ENCODE measurements at regions of chr15 and their contacts with region 1.

Region 1: GRCh38 chr15:40108855-40109735 is at the start of gene BMF:
- DNase-seq: peak; percentile 92 to 98 (median 93)
- H3K4me3 ChIP-seq: peak within 1 kb of the TSS; percentile 44 to 76
- H3K4me3 Mint-ChIP-seq: peak within 1 kb of the TSS; percentile 93 to 98 (median 96)
- H3K27ac ChIP-seq: peak within 1 kb of the TSS; percentile 56
- H3K27ac Mint-ChIP-seq: peak within 1 kb of the TSS; percentile 88 to 95 (median 92)
- H3K4me1 ChIP-seq: peaks cover 46% of the 10 kb centered on the region
- H3K4me1 Mint-ChIP-seq: peaks cover 17 to 49% (median 30%) of the 10 kb centered on the region in 4 donors
- H3K27me3 ChIP-seq: no peaks in the 10 kb centered on the region
- H3K27me3 Mint-ChIP-seq: peaks cover 2 to 4% of the 10 kb centered on the region in 2 donors
- total RNA-seq, gene BMF: 13.3 to 13.7 TPM

Region 2: DNA sequence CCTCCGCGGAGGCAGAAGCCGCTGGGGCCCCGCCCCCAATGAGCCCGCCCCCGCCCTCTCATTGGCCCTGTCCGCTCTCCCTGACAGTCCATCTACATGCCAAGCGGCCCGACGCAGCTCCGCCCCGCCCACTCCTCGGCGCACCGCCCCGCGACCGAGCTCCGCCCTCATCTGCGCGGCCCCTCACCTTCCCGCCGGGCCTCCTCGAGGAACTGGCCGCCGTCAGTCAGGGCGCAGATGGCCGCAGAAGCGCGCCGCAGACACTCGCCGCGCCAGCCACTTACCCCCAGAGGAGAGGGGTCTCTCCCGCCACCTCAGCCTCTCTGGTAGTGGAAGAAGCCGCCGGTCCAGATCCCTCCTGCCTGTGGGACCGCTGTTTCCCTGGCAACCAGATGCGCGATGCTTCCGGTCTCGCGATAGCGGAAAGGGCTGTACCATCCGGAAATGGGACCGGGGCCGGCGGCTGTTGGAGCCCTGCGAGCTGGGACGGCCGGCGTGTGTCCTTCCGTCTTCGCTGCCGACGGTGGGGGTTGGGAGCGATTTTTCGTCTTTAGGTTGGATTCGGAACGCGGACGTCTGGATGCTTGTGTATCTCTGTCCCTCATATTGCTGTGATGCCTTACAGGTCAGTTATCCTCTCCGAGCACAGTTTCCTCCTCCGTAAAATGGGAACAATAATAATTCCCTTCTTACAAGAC is 326.5 kb before region 1 on chr15 and contains the start of gene FSIP1:
- CTCF ChIA-PET with region 1: no interaction called
- POLR2A ChIA-PET with region 1: interaction called, 4 read pairs
- intact Hi-C with region 1: loop called (anchors 2 kb)
- DNase-seq: peak; percentile 96 to 99 (median 97)
- H3K4me3 ChIP-seq: peak within 1 kb of the TSS; percentile 97 to 100
- H3K4me3 Mint-ChIP-seq: peak within 1 kb of the TSS; percentile 88 to 98 (median 96)
- H3K27ac ChIP-seq: peak within 1 kb of the TSS; percentile 60
- H3K27ac Mint-ChIP-seq: peak within 1 kb of the TSS; percentile 83 to 97 (median 93)
- H3K4me1 ChIP-seq: peaks cover 38% of the 10 kb centered on the region
- H3K4me1 Mint-ChIP-seq: peaks cover 28 to 55% (median 44%) of the 10 kb centered on the region in 4 donors
- H3K27me3 ChIP-seq: no peaks in the 10 kb centered on the region
- H3K27me3 Mint-ChIP-seq: no peaks in the 10 kb centered on the region
- total RNA-seq, gene FSIP1: 0.47 to 1.1 TPM

Region 3: GRCh38 chr15:39852250-39852649 is 256.8 kb before region 1 on chr15:
- CTCF ChIA-PET with region 1: no interaction called
- POLR2A ChIA-PET with region 1: no interaction called
- intact Hi-C with region 1: no loop called
- DNase-seq: no peak
- H3K4me3 ChIP-seq: no peak overlapping the region
- H3K4me3 Mint-ChIP-seq: no peak overlapping the region
- H3K27ac ChIP-seq: no peak overlapping the region
- H3K27ac Mint-ChIP-seq: no peak overlapping the region
- H3K4me1 ChIP-seq: no peaks in the 10 kb centered on the region
- H3K4me1 Mint-ChIP-seq: no peaks in the 10 kb centered on the region
- H3K27me3 ChIP-seq: no peaks in the 10 kb centered on the region
- H3K27me3 Mint-ChIP-seq: peaks cover 14 to 17% of the 10 kb centered on the region in 2 donors

Region 4: DNA sequence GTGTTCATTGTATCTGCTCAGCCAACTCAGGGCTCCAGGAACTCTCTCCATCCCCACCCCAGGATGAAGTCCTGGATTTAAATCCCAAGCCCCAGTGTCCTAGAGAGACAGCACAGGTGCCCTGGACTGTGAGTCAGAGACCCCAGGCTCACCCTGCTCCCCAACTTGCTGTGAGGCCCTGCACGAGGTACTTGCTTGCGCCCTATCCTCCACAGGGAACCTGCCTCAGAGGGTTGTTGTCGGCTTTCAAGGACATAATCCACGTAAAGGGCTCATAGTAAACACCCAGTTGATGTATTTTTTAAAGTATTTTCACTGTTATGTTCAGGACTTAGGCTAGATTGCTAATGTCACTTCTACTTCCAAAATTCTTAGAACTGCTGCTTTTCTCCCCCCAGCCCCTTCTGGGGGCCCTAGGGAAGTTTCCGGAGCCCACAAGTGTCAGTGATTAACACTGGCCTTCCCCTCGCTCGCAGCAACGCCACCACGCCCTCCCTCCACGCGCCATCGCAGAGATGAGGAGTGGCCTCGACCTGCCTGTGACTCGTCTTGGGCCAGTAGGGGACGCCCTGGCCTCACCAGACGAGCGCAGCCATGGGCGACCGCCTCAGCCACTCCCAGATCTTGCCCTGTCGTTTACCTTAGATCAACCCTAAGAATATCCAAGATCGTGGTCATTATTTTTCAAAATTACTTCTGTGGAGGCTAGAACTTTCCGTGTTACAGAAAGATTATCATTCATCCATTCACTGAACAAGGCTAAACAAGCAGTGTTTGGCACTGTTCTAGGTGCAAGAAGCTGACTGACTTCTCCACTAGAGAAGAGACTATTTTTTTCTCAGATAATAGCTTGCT is 64.2 kb before region 1 on chr15:
- CTCF ChIA-PET with region 1: interaction called, 175 read pairs
- POLR2A ChIA-PET with region 1: interaction called, 63 read pairs
- intact Hi-C with region 1: no loop called
- DNase-seq: peak; percentile 70 to 82 (median 75)
- H3K4me3 ChIP-seq: peak overlapping the region in 1 of 2 donors; percentile 1
- H3K4me3 Mint-ChIP-seq: peak overlapping the region; percentile 1 to 73 (median 46)
- H3K27ac ChIP-seq: peak overlapping the region; percentile 24
- H3K27ac Mint-ChIP-seq: peak overlapping the region in 6 of 7 donors; percentile 47 to 91 (median 73)
- H3K4me1 ChIP-seq: peaks cover 55% of the 10 kb centered on the region
- H3K4me1 Mint-ChIP-seq: peaks cover 36 to 61% (median 41%) of the 10 kb centered on the region in 4 donors
- H3K27me3 ChIP-seq: no peaks in the 10 kb centered on the region
- H3K27me3 Mint-ChIP-seq: no peaks in the 10 kb centered on the region

Region 5: GRCh38 chr15:40087991-40088928 is 20.8 kb before region 1 on chr15:
- CTCF ChIA-PET with region 1: interaction called, 152 read pairs
- POLR2A ChIA-PET with region 1: interaction called, 6 read pairs
- intact Hi-C with region 1: no loop called
- DNase-seq: no peak
- H3K4me3 ChIP-seq: no peak overlapping the region
- H3K4me3 Mint-ChIP-seq: no peak overlapping the region
- H3K27ac ChIP-seq: no peak overlapping the region
- H3K27ac Mint-ChIP-seq: no peak overlapping the region
- H3K4me1 ChIP-seq: no peaks in the 10 kb centered on the region
- H3K4me1 Mint-ChIP-seq: no peaks in the 10 kb centered on the region
- H3K27me3 ChIP-seq: no peaks in the 10 kb centered on the region
- H3K27me3 Mint-ChIP-seq: peaks cover 16 to 18% of the 10 kb centered on the region in 2 donors

Region 6: GRCh38 chr15:40160689-40161688 is 51.9 kb after region 1 on chr15 and contains the start of gene BUB1B:
- CTCF ChIA-PET with region 1: interaction called, 14 read pairs
- POLR2A ChIA-PET with region 1: interaction called, 8 read pairs
- intact Hi-C with region 1: loop called (anchors 1 kb)
- DNase-seq: peak; percentile 92 to 95 (median 93)
- H3K4me3 ChIP-seq: peak within 1 kb of the TSS; percentile 84 to 88
- H3K4me3 Mint-ChIP-seq: no peak within 1 kb of the TSS
- H3K27ac ChIP-seq: peak within 1 kb of the TSS; percentile 28
- H3K27ac Mint-ChIP-seq: no peak within 1 kb of the TSS
- H3K4me1 ChIP-seq: peaks cover 19% of the 10 kb centered on the region
- H3K4me1 Mint-ChIP-seq: peaks cover 0 to 3% (median 2%) of the 10 kb centered on the region in 4 donors
- H3K27me3 ChIP-seq: no peaks in the 10 kb centered on the region
- H3K27me3 Mint-ChIP-seq: no peaks in the 10 kb centered on the region
- total RNA-seq, gene BUB1B: 0.55 to 0.89 TPM

Region 7: DNA sequence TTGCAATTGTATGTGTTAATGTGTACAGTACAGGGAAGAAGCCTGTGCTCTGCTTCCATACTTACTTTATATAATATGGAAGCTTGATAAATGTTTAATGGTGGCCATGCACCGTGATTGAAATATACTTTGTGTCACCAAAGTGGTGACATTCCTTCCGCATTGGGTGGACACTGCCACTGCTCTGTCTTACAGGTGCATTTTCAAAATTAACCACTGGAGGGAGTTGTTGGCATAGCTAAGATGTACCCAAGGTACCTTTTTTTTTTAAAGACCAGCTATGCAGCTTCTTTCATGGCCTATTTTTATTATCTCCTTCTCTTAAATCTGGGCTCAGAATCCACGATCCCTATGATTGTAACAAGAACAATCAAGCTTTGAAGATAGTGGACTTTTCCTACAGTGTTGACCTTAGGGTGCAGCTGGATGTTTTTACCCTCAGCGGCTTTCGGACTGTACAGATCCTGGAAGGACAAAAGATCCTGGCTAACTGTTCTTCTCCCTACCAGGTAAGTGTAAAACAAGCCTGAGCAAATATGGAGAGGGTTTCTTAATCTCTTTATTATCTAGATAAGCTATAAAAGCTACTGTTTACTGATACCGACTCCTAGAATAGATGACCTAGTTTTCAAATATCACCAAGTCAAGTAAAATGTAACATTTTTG is 108.2 kb after region 1 on chr15:
- CTCF ChIA-PET with region 1: interaction called, 21 read pairs
- POLR2A ChIA-PET with region 1: no interaction called
- intact Hi-C with region 1: loop called (anchors 1 kb)
- DNase-seq: peak; percentile 56 to 74 (median 69)
- H3K4me3 ChIP-seq: no peak overlapping the region
- H3K4me3 Mint-ChIP-seq: no peak overlapping the region
- H3K27ac ChIP-seq: no peak overlapping the region
- H3K27ac Mint-ChIP-seq: no peak overlapping the region
- H3K4me1 ChIP-seq: no peaks in the 10 kb centered on the region
- H3K4me1 Mint-ChIP-seq: no peaks in the 10 kb centered on the region
- H3K27me3 ChIP-seq: no peaks in the 10 kb centered on the region
- H3K27me3 Mint-ChIP-seq: no peaks in the 10 kb centered on the region